ENCODE measurements at regions of chr1 and their contacts with region 1.

Region 1: DNA sequence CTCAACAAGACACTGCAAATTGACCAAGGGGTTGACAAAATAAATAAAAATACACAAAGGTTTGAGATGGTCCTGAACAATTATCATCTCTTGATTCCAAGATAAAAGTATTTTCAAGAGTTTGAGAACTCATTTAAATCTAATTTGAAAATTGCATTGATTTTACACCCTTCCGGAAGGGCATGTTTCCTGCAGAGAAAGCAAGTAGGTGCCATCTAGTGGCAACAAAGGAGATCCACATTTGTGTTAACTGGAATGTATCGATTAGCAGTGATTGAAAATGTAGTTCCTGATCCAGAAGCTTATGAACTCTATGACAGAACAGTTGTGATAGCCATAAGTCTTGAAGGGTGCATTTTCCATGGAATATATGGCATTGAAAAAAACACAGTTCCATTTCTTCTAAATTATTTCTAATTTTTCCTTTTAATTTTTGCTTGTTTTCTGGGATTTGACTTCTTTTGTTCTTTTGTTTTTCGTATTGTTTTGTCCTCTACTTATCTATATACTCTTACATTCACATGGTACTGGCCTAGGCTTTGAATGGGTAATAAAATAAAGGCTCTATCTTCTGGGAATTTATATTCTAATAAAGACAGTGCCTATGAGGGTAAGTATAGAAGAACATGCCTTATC is 143.7 kb downstream of the DNM3 start:
- DNase-seq: peak in 4 of 5 donors; percentile 46 to 55 (median 49)
- H3K4me3 ChIP-seq: no peak overlapping the region
- H3K4me3 Mint-ChIP-seq: no peak overlapping the region
- H3K27ac ChIP-seq: no peak overlapping the region
- H3K27ac Mint-ChIP-seq: no peak overlapping the region
- H3K4me1 ChIP-seq: no peaks in the 10 kb centered on the region
- H3K4me1 Mint-ChIP-seq: no peaks in the 10 kb centered on the region
- H3K27me3 ChIP-seq: no peaks in the 10 kb centered on the region
- H3K27me3 Mint-ChIP-seq: peaks cover 0 to 5% of the 10 kb centered on the region in 2 donors

Region 2: GRCh38 chr1:171644805-171645483 is 340.0 kb before region 1 on chr1:
- CTCF ChIA-PET with region 1: interaction called, 88 read pairs
- POLR2A ChIA-PET with region 1: no interaction called
- intact Hi-C with region 1: loop called (anchors 1 kb)
- DNase-seq: peak; percentile 54 to 65 (median 56)
- H3K4me3 ChIP-seq: no peak overlapping the region
- H3K4me3 Mint-ChIP-seq: peak overlapping the region in 2 of 8 donors; percentile 15 to 48
- H3K27ac ChIP-seq: no peak overlapping the region
- H3K27ac Mint-ChIP-seq: peak overlapping the region in 2 of 7 donors; percentile 14 to 19
- H3K4me1 ChIP-seq: no peaks in the 10 kb centered on the region
- H3K4me1 Mint-ChIP-seq: peaks cover 6 to 12% (median 7%) of the 10 kb centered on the region in 4 donors
- H3K27me3 ChIP-seq: no peaks in the 10 kb centered on the region
- H3K27me3 Mint-ChIP-seq: peaks cover 3 to 9% of the 10 kb centered on the region in 2 donors

Region 3: GRCh38 chr1:171654942-171655745 is 329.8 kb before region 1 on chr1:
- CTCF ChIA-PET with region 1: interaction called, 15 read pairs
- POLR2A ChIA-PET with region 1: no interaction called
- intact Hi-C with region 1: loop called (anchors 1 kb)
- DNase-seq: peak; percentile 38 to 62 (median 52)
- H3K4me3 ChIP-seq: no peak overlapping the region
- H3K4me3 Mint-ChIP-seq: peak overlapping the region; percentile 31 to 74 (median 61)
- H3K27ac ChIP-seq: no peak overlapping the region
- H3K27ac Mint-ChIP-seq: no peak overlapping the region
- H3K4me1 ChIP-seq: peaks cover 12% of the 10 kb centered on the region
- H3K4me1 Mint-ChIP-seq: peaks cover 9 to 13% (median 10%) of the 10 kb centered on the region in 4 donors
- H3K27me3 ChIP-seq: no peaks in the 10 kb centered on the region
- H3K27me3 Mint-ChIP-seq: peaks cover 5 to 11% of the 10 kb centered on the region in 2 donors

Region 4: GRCh38 chr1:171966426-171967220 is 18.3 kb before region 1 on chr1:
- CTCF ChIA-PET with region 1: interaction called, 14 read pairs
- POLR2A ChIA-PET with region 1: no interaction called
- intact Hi-C with region 1: no loop called
- DNase-seq: no peak
- H3K4me3 ChIP-seq: no peak overlapping the region
- H3K4me3 Mint-ChIP-seq: no peak overlapping the region
- H3K27ac ChIP-seq: no peak overlapping the region
- H3K27ac Mint-ChIP-seq: no peak overlapping the region
- H3K4me1 ChIP-seq: no peaks in the 10 kb centered on the region
- H3K4me1 Mint-ChIP-seq: peaks cover 0 to 2% (median 0%) of the 10 kb centered on the region in 4 donors
- H3K27me3 ChIP-seq: no peaks in the 10 kb centered on the region
- H3K27me3 Mint-ChIP-seq: peaks cover 1 to 3% of the 10 kb centered on the region in 2 donors

Region 5: DNA sequence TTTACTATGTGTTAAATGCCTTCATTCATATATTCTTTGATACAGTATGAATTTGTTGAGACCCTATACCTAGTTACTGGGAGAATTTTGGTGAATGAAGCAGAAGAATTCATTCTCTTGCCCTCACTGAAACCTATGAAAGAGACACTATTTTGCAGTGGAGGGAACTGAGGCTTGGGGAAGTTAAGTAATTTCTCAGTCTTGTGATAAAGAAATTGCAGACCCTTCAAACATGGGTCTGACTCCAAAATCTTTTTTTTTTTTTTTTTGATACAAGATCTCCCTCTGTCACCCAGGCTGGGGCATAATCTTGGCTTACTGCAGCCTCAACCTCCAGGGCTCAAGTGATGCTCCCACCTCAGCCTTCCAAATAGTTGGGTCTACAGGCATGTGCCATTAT is 11.5 kb before region 1 on chr1:
- CTCF ChIA-PET with region 1: interaction called, 14 read pairs
- POLR2A ChIA-PET with region 1: no interaction called
- intact Hi-C with region 1: no loop called
- DNase-seq: no peak
- H3K4me3 ChIP-seq: no peak overlapping the region
- H3K4me3 Mint-ChIP-seq: no peak overlapping the region
- H3K27ac ChIP-seq: no peak overlapping the region
- H3K27ac Mint-ChIP-seq: no peak overlapping the region
- H3K4me1 ChIP-seq: no peaks in the 10 kb centered on the region
- H3K4me1 Mint-ChIP-seq: no peaks in the 10 kb centered on the region
- H3K27me3 ChIP-seq: no peaks in the 10 kb centered on the region
- H3K27me3 Mint-ChIP-seq: peaks cover 0 to 5% of the 10 kb centered on the region in 2 donors

Region 6: GRCh38 chr1:172002725-172003345 is 17.9 kb after region 1 on chr1:
- CTCF ChIA-PET with region 1: interaction called, 10 read pairs
- POLR2A ChIA-PET with region 1: no interaction called
- intact Hi-C with region 1: no loop called
- DNase-seq: peak; percentile 30 to 46 (median 32)
- H3K4me3 ChIP-seq: no peak overlapping the region
- H3K4me3 Mint-ChIP-seq: no peak overlapping the region
- H3K27ac ChIP-seq: no peak overlapping the region
- H3K27ac Mint-ChIP-seq: no peak overlapping the region
- H3K4me1 ChIP-seq: no peaks in the 10 kb centered on the region
- H3K4me1 Mint-ChIP-seq: peaks cover 6 to 16% (median 8%) of the 10 kb centered on the region in 4 donors
- H3K27me3 ChIP-seq: no peaks in the 10 kb centered on the region
- H3K27me3 Mint-ChIP-seq: no peaks in the 10 kb centered on the region

Region 7: DNA sequence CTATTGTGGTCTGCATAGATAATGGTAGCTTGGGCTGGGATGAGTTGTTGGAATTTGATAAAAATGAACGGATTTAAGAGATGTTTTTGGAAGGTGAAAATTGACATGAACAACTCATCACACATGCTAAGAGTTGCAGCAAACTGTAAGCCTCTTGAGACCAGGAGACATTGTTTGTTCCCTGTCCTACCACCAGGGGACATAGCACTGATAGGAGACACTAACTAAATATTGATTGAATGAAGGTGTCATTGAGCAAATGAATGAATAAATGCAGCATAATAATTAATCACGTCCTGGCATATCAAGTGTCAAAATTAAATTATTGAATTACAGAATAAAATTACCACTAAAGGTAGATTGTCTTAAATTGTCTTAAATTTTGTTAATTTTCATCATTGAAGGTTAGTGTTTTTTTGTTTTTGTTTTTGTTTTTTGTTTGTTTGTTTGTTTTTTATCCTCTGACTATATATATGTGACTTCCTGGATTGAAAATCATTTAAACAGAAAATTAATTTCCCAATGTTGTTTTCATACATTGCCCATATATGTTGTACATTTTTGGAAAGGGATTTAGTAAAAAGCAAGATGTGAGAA is 150.2 kb after region 1 on chr1:
- CTCF ChIA-PET with region 1: no interaction called
- POLR2A ChIA-PET with region 1: no interaction called
- intact Hi-C with region 1: no loop called
- DNase-seq: peak in 3 of 5 donors; percentile 19 to 32 (median 22)
- H3K4me3 ChIP-seq: no peak overlapping the region
- H3K4me3 Mint-ChIP-seq: no peak overlapping the region
- H3K27ac ChIP-seq: no peak overlapping the region
- H3K27ac Mint-ChIP-seq: no peak overlapping the region
- H3K4me1 ChIP-seq: no peaks in the 10 kb centered on the region
- H3K4me1 Mint-ChIP-seq: peaks cover 0 to 8% (median 5%) of the 10 kb centered on the region in 4 donors
- H3K27me3 ChIP-seq: no peaks in the 10 kb centered on the region
- H3K27me3 Mint-ChIP-seq: no peaks in the 10 kb centered on the region

Measured in CD4-positive, alpha-beta memory T cell (primary cell).